Common myeloid progenitor, CD34-positive (primary cell): ENCODE measurements at regions of chr3 and their contacts with region 1.

Region 1: DNA sequence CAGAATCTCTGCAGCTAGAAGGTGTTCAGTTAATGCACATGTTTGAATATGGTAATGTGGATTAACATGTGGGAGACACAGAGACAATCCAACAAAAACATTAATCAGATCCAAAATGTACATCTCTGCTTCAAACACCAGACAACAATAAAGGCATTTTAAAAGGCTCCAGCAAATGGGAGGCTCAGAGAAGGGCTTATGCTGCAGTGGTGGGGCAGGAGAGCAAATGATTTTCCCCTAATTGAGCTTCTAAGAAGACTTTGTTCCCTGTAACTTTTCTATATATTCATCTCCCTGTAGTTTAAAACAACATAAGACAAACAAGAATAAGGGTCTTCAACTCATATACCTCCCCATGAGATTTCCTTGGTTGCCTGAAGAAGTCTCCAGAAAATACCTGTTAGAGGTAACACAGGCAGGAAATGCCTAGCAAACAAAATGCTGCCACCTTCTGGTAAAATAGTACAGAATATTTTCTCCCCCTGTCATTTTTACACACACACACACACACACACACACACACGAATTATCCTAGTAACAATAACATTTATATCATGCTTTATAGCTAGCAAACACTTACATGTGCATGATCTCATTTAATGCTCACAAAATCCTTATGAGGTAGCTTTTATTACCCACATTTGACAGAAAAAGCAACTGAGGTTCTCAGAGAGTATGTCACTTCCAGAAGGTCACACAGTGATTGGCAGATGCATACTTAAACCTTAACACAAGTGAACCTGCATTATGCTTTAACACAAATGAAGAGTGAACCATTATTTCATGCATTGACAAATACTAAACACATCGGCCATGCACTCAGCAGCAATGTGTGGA is 123.4 kb upstream of the MB21D2 start:
- DNase-seq: peak; percentile 36 to 62 (median 54)
- H3K4me3 ChIP-seq: no peak overlapping the region
- H3K27ac ChIP-seq: no peak overlapping the region
- H3K4me1 ChIP-seq: no peaks in the 10 kb centered on the region
- H3K27me3 ChIP-seq: peaks cover 0 to 8% (median 0%) of the 10 kb centered on the region in 5 experiments

Region 2: GRCh38 chr3:192802957-192803899 is 237.8 kb before region 1 on chr3:
- CTCF ChIA-PET with region 1: interaction called, 255 read pairs
- POLR2A ChIA-PET with region 1: no interaction called
- DNase-seq: peak; percentile 54 to 77 (median 70)
- H3K4me3 ChIP-seq: no peak overlapping the region
- H3K27ac ChIP-seq: no peak overlapping the region
- H3K4me1 ChIP-seq: no peaks in the 10 kb centered on the region
- H3K27me3 ChIP-seq: peaks cover 0 to 4% (median 0%) of the 10 kb centered on the region in 5 experiments

Region 3: DNA sequence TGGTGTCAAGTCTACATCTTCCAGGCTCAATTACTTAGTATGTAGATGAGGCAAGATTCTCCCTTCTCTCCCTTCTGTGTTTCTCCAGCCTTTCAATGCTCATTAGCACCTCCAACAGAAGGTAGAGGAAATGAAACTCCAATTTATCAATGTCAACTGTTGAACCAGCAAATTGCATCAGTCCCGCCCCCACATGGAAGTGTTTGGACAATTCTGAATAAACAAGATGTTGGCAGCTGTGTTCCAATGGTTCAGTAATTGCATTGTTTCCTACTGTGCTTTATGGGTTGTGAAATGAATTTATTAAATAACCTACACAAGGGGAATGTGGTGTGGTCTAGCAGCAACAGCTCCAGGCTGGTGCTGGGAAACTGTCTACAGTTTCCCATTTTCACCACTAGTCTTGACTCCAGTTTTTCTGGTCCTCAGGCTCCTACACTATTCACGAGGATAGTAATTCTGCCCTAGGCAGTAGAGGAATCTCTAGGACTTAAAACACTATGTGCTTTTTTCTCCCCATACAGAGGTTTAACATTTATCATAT is 215.3 kb before region 1 on chr3:
- CTCF ChIA-PET with region 1: interaction called, 255 read pairs
- POLR2A ChIA-PET with region 1: no interaction called
- DNase-seq: no peak
- H3K4me3 ChIP-seq: no peak overlapping the region
- H3K27ac ChIP-seq: no peak overlapping the region
- H3K4me1 ChIP-seq: no peaks in the 10 kb centered on the region
- H3K27me3 ChIP-seq: no peaks in the 10 kb centered on the region

Region 4: GRCh38 chr3:192917404-192918274 is 123.4 kb before region 1 on chr3 and contains the start of gene MB21D2:
- CTCF ChIA-PET with region 1: interaction called, 15 read pairs
- POLR2A ChIA-PET with region 1: no interaction called
- DNase-seq: peak; percentile 55 to 73 (median 67)
- H3K4me3 ChIP-seq: peak within 1 kb of the TSS; percentile 48 to 90 (median 78)
- H3K27ac ChIP-seq: no peak within 1 kb of the TSS
- H3K4me1 ChIP-seq: peaks cover 3 to 21% (median 19%) of the 10 kb centered on the region in 4 experiments
- H3K27me3 ChIP-seq: peaks cover 29 to 62% (median 33%) of the 10 kb centered on the region in 5 experiments